Activated T-helper 2 cell treated with anti-CD3 and anti-CD28 coated beads, Interferon-gamma antibody, Interleukin-2, Interleukin-4, amounts not matched to agents 10 μg/mL and 5 μg/mL and 100 μg/mL, durations not matched to agents 14 hours and 24 hours and 36 hours (primary cell): ENCODE measurements at regions of chr13 and their contacts with region 1.

Region 1: GRCh38 chr13:73715114-73715910 is 418.9 kb downstream of the KLF12 start:
- DNase-seq: peak; percentile 53
- H3K4me3 Mint-ChIP-seq: peak overlapping the region; percentile 55
- H3K27ac Mint-ChIP-seq: peak overlapping the region; percentile 79
- H3K4me1 Mint-ChIP-seq: peaks cover 54% of the 10 kb centered on the region
- H3K27me3 Mint-ChIP-seq: no peaks in the 10 kb centered on the region

Region 2: DNA sequence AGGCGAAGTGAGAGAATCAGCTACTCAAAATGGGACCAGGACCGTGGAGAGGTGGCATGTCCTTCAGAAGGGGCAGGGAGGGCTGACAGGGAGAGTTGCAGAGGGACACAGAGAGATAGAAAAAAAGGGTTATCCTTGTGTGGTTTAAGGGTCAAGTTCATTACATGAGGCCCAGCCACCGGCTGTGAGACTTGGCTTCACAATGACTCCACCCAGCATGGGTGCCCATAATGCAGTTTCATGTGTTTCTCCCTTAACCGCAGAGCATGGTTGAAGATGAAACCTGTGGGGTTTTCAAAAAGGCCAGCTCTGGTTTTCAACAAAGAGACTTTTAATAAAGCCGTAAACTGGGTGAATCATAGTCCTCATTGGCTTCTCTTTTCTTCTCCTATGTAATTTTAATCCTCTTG is 491.9 kb before region 1 on chr13:
- intact Hi-C with region 1: loop called (anchors 5 kb)
- DNase-seq: peak; percentile 22
- H3K4me3 Mint-ChIP-seq: no peak overlapping the region
- H3K27ac Mint-ChIP-seq: no peak overlapping the region
- H3K4me1 Mint-ChIP-seq: peaks cover 27% of the 10 kb centered on the region
- H3K27me3 Mint-ChIP-seq: peaks cover 36% of the 10 kb centered on the region

Region 3: DNA sequence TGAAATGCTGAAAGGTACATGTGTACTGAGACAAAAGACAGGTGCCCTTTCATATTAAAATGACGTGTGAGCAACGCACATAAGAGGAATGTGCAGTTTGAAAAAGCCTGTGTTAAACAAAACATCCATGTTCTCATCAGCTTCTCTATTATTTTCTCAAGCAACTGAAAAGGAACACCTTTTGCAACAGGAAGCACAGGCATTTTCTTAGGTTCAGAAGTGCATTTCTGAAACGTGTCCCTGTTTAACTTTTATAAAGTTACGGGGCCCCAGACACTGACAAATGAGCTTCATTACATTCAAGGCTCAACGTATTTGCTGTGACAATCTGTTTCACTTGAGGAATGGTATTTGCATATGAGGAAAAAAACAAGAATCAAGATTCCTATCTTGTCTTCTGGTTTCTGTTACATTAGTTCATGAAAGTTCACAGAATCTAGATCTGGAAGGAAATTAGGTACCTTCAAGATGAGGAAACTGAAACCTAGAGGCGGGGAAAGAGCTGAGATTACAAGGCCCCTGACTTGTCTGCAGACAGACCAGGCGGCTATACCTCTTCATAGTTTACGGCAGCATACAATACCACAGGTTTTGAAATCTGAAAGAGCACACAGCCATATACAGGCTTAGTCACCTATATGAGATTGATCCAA is 12.8 kb before region 1 on chr13:
- intact Hi-C with region 1: loop called (anchors 1 kb)
- DNase-seq: peak; percentile 41
- H3K4me3 Mint-ChIP-seq: no peak overlapping the region
- H3K27ac Mint-ChIP-seq: peak overlapping the region; percentile 60
- H3K4me1 Mint-ChIP-seq: peaks cover 34% of the 10 kb centered on the region
- H3K27me3 Mint-ChIP-seq: no peaks in the 10 kb centered on the region

Region 4: GRCh38 chr13:73898276-73898675 is 183.0 kb after region 1 on chr13:
- intact Hi-C with region 1: no loop called
- DNase-seq: no peak
- H3K4me3 Mint-ChIP-seq: no peak overlapping the region
- H3K27ac Mint-ChIP-seq: no peak overlapping the region
- H3K4me1 Mint-ChIP-seq: peaks cover 10% of the 10 kb centered on the region
- H3K27me3 Mint-ChIP-seq: no peaks in the 10 kb centered on the region

Region 5: GRCh38 chr13:73943137-73943964 is 228.0 kb after region 1 on chr13:
- intact Hi-C with region 1: loop called (anchors 5 kb)
- DNase-seq: no peak
- H3K4me3 Mint-ChIP-seq: peak overlapping the region; percentile 24
- H3K27ac Mint-ChIP-seq: peak overlapping the region; percentile 82
- H3K4me1 Mint-ChIP-seq: peaks cover 47% of the 10 kb centered on the region
- H3K27me3 Mint-ChIP-seq: no peaks in the 10 kb centered on the region

Region 6: GRCh38 chr13:74243637-74244526 is 528.6 kb after region 1 on chr13:
- intact Hi-C with region 1: loop called (anchors 5 kb)
- DNase-seq: no peak
- H3K4me3 Mint-ChIP-seq: peak overlapping the region; percentile 11
- H3K27ac Mint-ChIP-seq: peak overlapping the region; percentile 73
- H3K4me1 Mint-ChIP-seq: peaks cover 46% of the 10 kb centered on the region
- H3K27me3 Mint-ChIP-seq: peaks cover 15% of the 10 kb centered on the region

Region 7: GRCh38 chr13:75319254-75319653 is 1603.9 kb after region 1 on chr13:
- intact Hi-C with region 1: loop called (anchors 1 kb)
- DNase-seq: no peak
- H3K4me3 Mint-ChIP-seq: peak overlapping the region; percentile 30
- H3K27ac Mint-ChIP-seq: peak overlapping the region; percentile 92
- H3K4me1 Mint-ChIP-seq: peaks cover 65% of the 10 kb centered on the region
- H3K27me3 Mint-ChIP-seq: no peaks in the 10 kb centered on the region

Region 8: DNA sequence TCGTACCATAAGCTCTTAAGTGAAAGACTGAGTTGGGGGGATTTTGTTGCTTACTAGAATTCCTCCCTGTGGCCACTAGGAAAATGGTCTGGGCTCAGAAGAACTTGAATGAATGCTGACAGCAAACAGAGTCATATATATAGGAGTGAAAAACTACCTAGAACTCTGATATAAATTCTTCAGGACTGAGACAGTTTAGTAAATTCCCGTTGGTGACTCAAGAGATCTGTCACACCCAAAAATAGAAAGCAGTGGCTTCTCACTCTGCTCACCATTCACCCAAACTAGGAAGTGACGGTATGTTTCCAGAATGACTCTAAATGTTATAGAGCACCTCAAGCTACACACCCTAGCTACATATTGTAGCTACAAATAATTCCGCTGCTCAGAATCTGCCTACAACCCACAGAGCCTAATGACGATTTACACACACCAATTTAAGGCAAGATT is 1650.4 kb after region 1 on chr13:
- intact Hi-C with region 1: loop called (anchors 5 kb)
- DNase-seq: peak; percentile 22
- H3K4me3 Mint-ChIP-seq: peak overlapping the region; percentile 59
- H3K27ac Mint-ChIP-seq: peak overlapping the region; percentile 95
- H3K4me1 Mint-ChIP-seq: peaks cover 46% of the 10 kb centered on the region
- H3K27me3 Mint-ChIP-seq: no peaks in the 10 kb centered on the region